Esophagus muscularis mucosa (tissue), 4 donors: ENCODE measurements at regions of chr13 and their contacts with region 1.

Region 1: GRCh38 chr13:51814825-51815650 is 11.1 kb upstream of the DHRS12 start:
- DNase-seq: no peak
- H3K4me3 ChIP-seq: peak overlapping the region; percentile 23 to 44 (median 30)
- H3K27ac ChIP-seq: no peak overlapping the region
- H3K4me1 ChIP-seq: peaks cover 19 to 23% (median 20%) of the 10 kb centered on the region in 4 donors
- H3K27me3 ChIP-seq: no peaks in the 10 kb centered on the region
- CTCF ChIP-seq: peak; percentile 80 to 88 (median 81)
- EP300 ChIP-seq: no peak
- POLR2A ChIP-seq: no peak

Region 2: DNA sequence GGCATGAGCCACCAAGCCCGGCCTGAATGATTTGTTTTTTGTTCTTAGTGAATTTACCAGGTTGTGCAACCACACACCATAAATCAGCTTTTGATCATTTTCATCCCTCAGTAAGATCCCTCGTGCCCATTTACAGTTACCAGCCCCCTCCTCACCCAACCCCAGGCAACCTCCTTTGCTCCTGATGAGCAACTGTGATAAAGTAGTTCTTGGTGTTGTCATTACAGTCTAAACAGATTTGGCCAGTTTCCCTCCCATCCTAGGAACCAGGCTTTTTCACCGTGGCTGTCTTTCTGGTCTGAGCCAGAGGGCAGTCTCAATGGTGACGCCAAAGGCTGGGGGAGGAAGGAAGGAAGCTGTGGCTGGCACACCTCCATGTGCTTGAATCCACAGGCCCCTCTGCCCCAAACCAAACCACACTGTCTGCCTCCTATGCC is 291.9 kb before region 1 on chr13:
- intact Hi-C with region 1: no loop called
- DNase-seq: no peak
- H3K4me3 ChIP-seq: no peak overlapping the region
- H3K27ac ChIP-seq: no peak overlapping the region
- H3K4me1 ChIP-seq: no peaks in the 10 kb centered on the region
- H3K27me3 ChIP-seq: no peaks in the 10 kb centered on the region
- CTCF ChIP-seq: no peak
- EP300 ChIP-seq: no peak
- POLR2A ChIP-seq: no peak

Region 3: DNA sequence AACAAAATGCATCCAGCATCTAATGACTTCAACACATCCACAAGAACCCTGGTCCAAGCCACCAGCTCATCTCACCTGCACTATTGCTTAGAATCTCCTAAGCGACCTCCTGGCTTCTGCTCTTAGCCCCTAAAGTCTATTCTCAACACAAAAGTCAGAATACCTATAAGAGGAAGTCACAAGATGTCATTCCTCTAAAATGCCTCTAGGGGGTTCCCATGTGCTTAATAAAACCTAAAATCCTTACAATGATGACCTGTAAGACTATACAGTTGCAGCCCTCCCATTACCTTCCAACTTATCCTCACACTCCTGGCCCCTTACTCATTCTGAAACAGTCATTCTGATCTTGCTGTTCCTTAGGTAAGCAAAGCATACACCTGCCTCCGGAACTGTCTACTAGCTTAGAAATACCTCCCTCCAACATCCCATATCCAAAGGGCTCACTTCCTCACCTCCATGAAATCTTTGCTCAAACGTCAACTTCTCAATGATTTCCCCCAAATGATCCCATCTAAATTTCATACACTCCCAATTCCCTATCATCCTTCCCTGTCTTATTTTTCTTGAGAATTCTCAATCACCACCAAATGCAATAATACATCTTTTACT is 186.2 kb after region 1 on chr13:
- intact Hi-C with region 1: loop called (anchors 10 kb)
- DNase-seq: no peak
- H3K4me3 ChIP-seq: no peak overlapping the region
- H3K27ac ChIP-seq: no peak overlapping the region
- H3K4me1 ChIP-seq: peaks cover 15 to 31% (median 29%) of the 10 kb centered on the region in 4 donors
- H3K27me3 ChIP-seq: no peaks in the 10 kb centered on the region
- CTCF ChIP-seq: peak; percentile 55 to 81 (median 57)
- EP300 ChIP-seq: no peak
- POLR2A ChIP-seq: no peak